Endothelial cell of umbilical vein (primary cell): ENCODE measurements at regions of chr3 and their contacts with region 1.

Region 1: DNA sequence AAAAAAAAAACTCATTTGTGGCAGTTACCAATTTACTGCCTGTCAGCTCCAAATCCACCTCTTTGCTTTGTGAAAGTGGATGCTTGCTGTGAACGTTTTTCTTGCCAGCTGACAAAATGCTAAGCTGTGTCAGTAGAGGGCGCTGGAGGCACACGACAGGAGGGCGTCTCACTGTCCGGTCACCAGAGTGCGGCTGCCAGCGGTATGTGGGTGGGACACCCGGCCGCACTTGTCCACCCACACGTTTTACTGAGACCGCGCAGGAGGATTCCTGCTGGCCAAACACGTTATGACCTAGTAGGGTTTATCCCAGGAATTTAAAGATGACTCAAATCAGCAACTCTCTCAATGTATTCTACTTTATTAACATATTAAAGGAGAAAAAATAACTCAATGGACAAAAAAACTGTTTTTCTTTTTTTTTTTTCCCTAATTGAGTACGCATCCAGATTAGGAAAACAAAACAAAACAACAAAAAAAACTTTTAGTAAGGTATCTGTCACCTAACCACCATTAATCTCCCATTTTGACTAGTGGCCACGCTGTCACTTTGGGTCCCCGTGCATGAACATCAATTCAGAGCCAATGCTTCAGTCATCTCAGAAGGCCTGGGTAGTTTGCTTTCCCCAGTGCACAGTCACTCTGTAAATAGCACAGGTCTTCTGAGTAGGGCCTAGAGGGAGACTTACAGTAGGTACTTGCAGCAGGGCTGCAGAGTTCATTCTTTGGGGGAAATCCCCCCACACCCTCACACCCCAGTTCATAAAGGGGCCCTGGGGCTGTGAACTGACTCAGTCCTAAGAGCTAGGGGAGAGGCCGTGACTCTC is 43.8 kb upstream of the RPL35A start:
- DNase-seq: peak; percentile 88
- H3K4me3 ChIP-seq: no peak overlapping the region
- H3K27ac ChIP-seq: no peak overlapping the region
- H3K4me1 ChIP-seq: no peaks in the 10 kb centered on the region
- H3K27me3 ChIP-seq: no peaks in the 10 kb centered on the region
- CTCF ChIP-seq: peak; percentile 87 to 89
- POLR2A ChIP-seq: no peak

Region 2: GRCh38 chr3:197880491-197881269 is 25.6 kb before region 1 on chr3:
- CTCF ChIA-PET with region 1: no interaction called
- POLR2A ChIA-PET with region 1: no interaction called
- dilution Hi-C with region 1: no loop called
- intact Hi-C with region 1: no loop called
- DNase-seq: no peak
- H3K4me3 ChIP-seq: no peak overlapping the region
- H3K27ac ChIP-seq: no peak overlapping the region
- H3K4me1 ChIP-seq: no peaks in the 10 kb centered on the region
- H3K27me3 ChIP-seq: no peaks in the 10 kb centered on the region
- CTCF ChIP-seq: no peak
- POLR2A ChIP-seq: no peak

Region 3: DNA sequence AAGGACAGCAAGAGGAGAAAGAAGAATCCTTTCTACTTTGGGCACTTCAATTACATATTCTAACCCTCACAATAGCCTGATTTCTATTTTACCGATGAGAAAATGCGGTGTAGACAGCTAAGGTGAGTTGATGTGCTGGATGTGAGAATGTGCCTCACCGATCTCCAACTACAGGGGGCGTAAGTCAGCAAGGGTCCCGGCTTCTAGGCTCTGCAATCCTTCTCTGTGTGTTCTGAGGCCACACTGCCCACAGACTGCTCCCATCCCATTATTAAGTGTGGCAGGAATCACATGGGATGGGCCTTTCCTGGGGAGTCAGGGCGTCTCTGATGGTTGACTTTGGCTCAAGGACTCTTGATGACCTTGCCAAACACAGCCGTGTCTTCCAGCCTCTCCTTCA is 20.2 kb after region 1 on chr3:
- CTCF ChIA-PET with region 1: interaction called, 12 read pairs
- POLR2A ChIA-PET with region 1: no interaction called
- dilution Hi-C with region 1: no loop called
- intact Hi-C with region 1: no loop called
- DNase-seq: no peak
- H3K4me3 ChIP-seq: no peak overlapping the region
- H3K27ac ChIP-seq: no peak overlapping the region
- H3K4me1 ChIP-seq: no peaks in the 10 kb centered on the region
- H3K27me3 ChIP-seq: no peaks in the 10 kb centered on the region
- CTCF ChIP-seq: peak; percentile 25 to 31
- POLR2A ChIP-seq: no peak

Region 4: DNA sequence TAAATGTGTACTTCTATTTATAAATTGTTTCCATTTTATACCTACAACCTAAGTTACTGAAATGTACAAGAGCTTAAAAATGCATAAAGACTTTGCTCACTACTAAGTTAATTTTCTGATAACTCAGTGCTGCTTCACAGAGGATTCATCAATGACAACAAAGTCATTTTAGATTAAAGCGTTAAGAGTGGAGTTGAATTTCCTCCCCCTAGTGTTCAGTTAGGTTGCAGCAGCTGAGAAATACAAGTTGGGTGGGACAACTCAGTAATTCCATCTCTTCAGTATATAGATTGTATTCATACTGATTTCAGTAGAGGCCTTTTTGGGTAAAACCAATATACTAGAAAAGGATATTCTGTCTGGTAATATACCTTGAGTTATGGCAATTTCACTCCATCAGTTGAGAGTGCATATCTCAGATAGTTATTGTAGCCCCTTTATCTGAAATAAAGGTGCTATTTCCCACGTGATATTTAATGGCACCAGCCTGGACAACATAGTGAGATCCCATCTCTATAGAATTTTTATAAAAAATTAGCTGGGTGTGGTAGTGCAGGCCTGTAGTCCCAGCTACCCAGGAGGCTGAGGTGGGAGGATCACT is 36.8 kb after region 1 on chr3:
- CTCF ChIA-PET with region 1: interaction called, 56 read pairs
- POLR2A ChIA-PET with region 1: no interaction called
- dilution Hi-C with region 1: no loop called
- intact Hi-C with region 1: loop called (anchors 1 kb)
- DNase-seq: peak; percentile 62
- H3K4me3 ChIP-seq: no peak overlapping the region
- H3K27ac ChIP-seq: no peak overlapping the region
- H3K4me1 ChIP-seq: no peaks in the 10 kb centered on the region
- H3K27me3 ChIP-seq: no peaks in the 10 kb centered on the region
- CTCF ChIP-seq: peak; percentile 60 to 62
- POLR2A ChIP-seq: no peak

Region 5: GRCh38 chr3:198017100-198017499 is 110.9 kb after region 1 on chr3:
- CTCF ChIA-PET with region 1: no interaction called
- POLR2A ChIA-PET with region 1: no interaction called
- dilution Hi-C with region 1: no loop called
- intact Hi-C with region 1: no loop called
- DNase-seq: no peak
- H3K4me3 ChIP-seq: no peak overlapping the region
- H3K27ac ChIP-seq: no peak overlapping the region
- H3K4me1 ChIP-seq: no peaks in the 10 kb centered on the region
- H3K27me3 ChIP-seq: no peaks in the 10 kb centered on the region
- CTCF ChIP-seq: no peak
- POLR2A ChIP-seq: no peak